Activated CD4-positive, alpha-beta T cell treated with anti-CD3 and anti-CD28 coated beads for 36 hours (primary cell): ENCODE measurements at regions of chr12 and their contacts with region 1.

Region 1: DNA sequence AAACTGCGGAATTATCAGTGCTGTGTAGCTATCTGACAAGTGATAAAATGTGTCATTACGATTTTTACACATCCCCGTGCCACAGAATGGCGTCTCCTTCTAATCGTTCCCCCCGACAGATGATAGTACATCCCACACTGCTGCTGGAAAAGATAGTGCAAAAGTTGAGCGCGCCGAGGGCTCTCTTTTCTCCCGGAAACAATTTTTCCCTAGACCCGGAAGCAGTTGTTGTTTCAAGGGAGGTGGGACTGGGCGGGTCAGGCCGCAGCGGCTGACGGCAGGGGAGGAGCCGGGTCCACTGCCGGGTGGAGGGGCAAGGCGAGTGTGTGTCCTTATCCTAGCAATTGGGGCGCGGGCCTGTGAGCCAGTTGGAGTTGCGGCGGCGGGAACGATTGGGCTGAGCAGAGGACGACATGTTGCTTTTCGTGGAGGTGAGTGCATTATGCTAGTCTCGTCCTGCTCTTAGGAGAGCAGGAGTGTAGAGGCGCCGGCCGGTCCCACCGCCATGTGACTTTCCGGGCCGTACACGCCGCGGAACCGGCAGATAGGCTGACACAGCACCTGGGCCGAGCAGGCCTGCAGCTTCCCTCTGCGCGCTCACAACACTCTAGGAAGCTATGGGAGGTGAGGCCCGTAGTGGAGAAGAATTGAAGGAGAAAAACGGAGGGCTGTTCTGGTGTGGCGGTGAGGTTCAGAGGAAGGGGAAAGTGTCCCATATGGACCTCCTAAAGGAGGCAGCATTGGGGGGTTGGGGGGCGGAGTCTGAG is at the start of gene LARP4:
- DNase-seq: peak; percentile 95
- ATAC-seq: peak; percentile 97
- H3K4me3 Mint-ChIP-seq: peak within 1 kb of the TSS; percentile 93
- H3K27ac Mint-ChIP-seq: peak within 1 kb of the TSS; percentile 94
- H3K4me1 Mint-ChIP-seq: peaks cover 13% of the 10 kb centered on the region
- H3K27me3 Mint-ChIP-seq: no peaks in the 10 kb centered on the region
- total RNA-seq, gene LARP4: 66.3 to 72.4 TPM

Region 2: DNA sequence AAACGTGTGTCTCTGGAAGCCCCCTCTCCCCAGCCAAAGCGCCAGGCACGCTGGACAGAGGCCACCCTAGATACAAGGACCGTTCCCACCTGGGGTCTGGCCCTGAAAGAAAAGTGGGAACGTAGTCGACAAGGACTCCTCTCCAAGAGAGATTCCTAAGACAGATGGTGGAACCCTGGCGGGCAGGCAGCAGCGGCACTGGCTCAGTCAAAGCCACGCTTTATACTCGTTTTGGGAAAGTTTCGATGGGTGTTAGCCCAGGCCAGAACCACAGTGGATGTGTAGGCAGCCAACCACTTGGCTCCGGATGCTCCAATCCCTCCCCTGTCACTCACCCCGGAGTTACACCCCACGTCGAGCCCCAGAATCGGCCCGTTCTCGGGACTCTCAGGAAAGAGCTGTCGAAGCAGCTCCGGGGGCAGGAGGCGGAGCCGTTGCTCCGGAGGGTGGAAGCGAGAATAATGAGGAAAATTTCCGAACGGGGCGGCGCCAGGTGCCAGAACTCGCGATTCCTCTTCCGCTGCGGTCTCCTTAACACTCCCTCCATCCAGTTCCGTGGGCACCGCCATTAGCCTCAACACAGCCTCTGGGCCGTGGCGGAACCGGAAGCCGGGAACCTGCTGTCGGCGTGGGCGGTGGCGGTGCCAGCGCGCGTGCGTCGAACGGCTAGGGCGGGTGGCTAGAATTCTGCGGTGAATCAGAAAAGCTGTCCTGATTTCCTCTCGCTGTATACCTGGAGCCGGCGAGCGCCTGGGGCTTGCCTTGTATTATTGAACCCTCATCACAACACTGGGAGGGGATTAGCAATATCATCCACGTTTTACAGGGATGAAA is 558.0 kb before region 1 on chr12 and contains the start of gene BCDIN3D:
- CTCF ChIA-PET with region 1: no interaction called
- POLR2A ChIA-PET with region 1: no interaction called
- intact Hi-C with region 1: loop called in 1 of 2 experiments (anchors 2 kb)
- DNase-seq: peak; percentile 97
- ATAC-seq: peak; percentile 92
- H3K4me3 Mint-ChIP-seq: peak within 1 kb of the TSS; percentile 90
- H3K27ac Mint-ChIP-seq: peak within 1 kb of the TSS; percentile 91
- H3K4me1 Mint-ChIP-seq: peaks cover 30% of the 10 kb centered on the region
- H3K27me3 Mint-ChIP-seq: no peaks in the 10 kb centered on the region
- total RNA-seq, gene BCDIN3D: 5.5 to 5.6 TPM

Region 3: DNA sequence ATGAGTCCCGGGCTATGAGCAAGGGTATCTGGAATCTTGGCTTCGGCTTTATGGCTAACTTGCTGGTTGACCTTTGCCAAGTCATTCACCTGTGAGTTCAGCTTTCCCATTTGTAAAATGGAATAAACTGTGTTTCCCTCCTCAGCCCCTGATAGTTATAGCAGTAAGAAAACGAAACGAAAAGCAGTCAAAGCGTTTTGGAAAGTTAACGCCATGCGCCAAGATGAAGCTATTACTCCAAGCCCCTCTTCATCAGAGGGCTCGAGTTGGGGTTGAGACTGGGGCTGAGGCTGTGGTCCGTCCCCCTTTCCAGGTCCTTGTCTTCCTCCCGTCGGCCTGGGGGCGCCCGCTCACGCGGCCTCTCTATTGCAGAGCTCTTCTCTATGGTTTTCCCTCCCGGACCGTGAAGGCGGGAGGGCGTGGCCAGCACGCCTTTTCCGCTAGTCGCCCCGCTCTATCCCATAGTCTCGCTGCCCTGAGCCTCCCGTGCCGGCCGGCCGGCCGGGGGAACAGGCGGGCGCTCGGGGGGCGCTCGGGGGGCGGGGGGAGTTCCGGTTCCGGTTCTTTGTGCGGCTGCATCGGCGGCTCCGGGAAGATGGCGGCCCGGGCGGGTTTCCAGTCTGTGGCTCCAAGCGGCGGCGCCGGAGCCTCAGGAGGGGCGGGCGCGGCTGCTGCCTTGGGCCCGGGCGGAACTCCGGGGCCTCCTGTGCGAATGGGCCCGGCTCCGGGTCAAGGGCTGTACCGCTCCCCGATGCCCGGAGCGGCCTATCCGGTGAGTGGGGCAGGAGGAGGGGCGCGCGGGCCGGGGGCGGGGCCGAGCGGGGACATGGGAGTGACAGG is 315.8 kb before region 1 on chr12 and contains the start of gene SMARCD1:
- CTCF ChIA-PET with region 1: no interaction called
- POLR2A ChIA-PET with region 1: interaction called, 4 read pairs
- intact Hi-C with region 1: loop called (anchors 1 to 2 kb)
- DNase-seq: peak; percentile 91
- ATAC-seq: peak; percentile 90
- H3K4me3 Mint-ChIP-seq: peak within 1 kb of the TSS; percentile 85
- H3K27ac Mint-ChIP-seq: peak within 1 kb of the TSS; percentile 96
- H3K4me1 Mint-ChIP-seq: peaks cover 36% of the 10 kb centered on the region
- H3K27me3 Mint-ChIP-seq: no peaks in the 10 kb centered on the region
- total RNA-seq, gene SMARCD1: 51.8 to 76.6 TPM

Region 4: DNA sequence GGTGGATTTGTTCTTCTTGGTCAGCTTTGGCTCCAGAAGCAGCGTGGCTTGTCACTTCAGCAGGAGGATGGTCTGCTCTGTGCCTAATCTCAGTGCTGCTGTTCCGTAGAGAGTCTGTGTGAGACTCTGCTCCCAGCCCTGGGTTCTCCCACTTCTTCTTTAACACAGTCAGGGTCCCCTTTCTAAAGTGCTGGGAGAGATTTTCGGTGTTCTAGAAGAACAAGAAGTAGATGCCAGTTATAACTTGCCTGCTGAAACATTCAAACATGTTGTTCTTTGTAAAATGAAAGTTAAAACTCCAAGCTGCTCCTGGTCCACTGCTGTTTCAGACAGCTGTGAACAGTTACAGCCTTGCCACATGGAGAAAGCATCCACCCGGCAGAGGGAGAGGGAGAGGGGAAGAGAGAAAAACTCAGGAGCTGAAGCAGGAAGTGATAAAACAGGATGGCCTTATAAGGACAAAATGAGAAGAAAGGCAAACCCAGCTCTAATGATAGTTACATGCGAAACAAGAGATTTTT is 178.4 kb before region 1 on chr12:
- CTCF ChIA-PET with region 1: no interaction called
- POLR2A ChIA-PET with region 1: interaction called, 5 read pairs
- intact Hi-C with region 1: loop called in 1 of 2 experiments (anchors 2 kb)
- DNase-seq: peak; percentile 48
- ATAC-seq: peak; percentile 21
- H3K4me3 Mint-ChIP-seq: no peak overlapping the region
- H3K27ac Mint-ChIP-seq: no peak overlapping the region
- H3K4me1 Mint-ChIP-seq: peaks cover 40% of the 10 kb centered on the region
- H3K27me3 Mint-ChIP-seq: no peaks in the 10 kb centered on the region

Region 5: DNA sequence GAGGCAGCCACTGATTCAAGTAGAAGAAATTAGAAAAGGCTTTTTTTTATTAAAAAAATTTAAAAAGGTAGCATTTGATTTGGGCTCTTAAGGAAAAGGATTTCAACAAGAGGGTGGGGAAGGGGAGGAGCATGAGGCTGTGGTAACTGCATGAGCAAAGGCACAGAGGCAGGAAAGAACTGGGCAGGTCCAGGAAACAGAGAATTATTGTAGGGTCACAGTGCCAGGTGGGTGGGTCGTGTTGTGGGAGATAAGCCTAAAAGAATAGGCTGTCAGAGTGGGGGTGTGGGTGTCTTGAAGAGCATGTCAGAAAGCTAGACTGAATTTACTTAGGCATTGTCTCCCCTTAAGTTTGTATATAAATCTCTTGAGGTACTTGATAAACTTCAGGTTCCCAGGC is 125.2 kb before region 1 on chr12:
- CTCF ChIA-PET with region 1: no interaction called
- POLR2A ChIA-PET with region 1: no interaction called
- intact Hi-C with region 1: no loop called
- DNase-seq: no peak
- ATAC-seq: no peak
- H3K4me3 Mint-ChIP-seq: no peak overlapping the region
- H3K27ac Mint-ChIP-seq: no peak overlapping the region
- H3K4me1 Mint-ChIP-seq: peaks cover 5% of the 10 kb centered on the region
- H3K27me3 Mint-ChIP-seq: no peaks in the 10 kb centered on the region

Region 6: GRCh38 chr12:51025836-51026638 is 625.3 kb after region 1 on chr12 and contains the start of gene SLC11A2:
- CTCF ChIA-PET with region 1: no interaction called
- POLR2A ChIA-PET with region 1: no interaction called
- intact Hi-C with region 1: no loop called
- DNase-seq: peak; percentile 97
- ATAC-seq: peak; percentile 88
- H3K4me3 Mint-ChIP-seq: peak within 1 kb of the TSS; percentile 93
- H3K27ac Mint-ChIP-seq: peak within 1 kb of the TSS; percentile 98
- H3K4me1 Mint-ChIP-seq: peaks cover 55% of the 10 kb centered on the region
- H3K27me3 Mint-ChIP-seq: no peaks in the 10 kb centered on the region
- total RNA-seq, gene SLC11A2: 31.0 to 32.9 TPM

Region 7: GRCh38 chr12:51083126-51083833 is 682.5 kb after region 1 on chr12 and contains the start of gene CSRNP2:
- CTCF ChIA-PET with region 1: no interaction called
- POLR2A ChIA-PET with region 1: no interaction called
- intact Hi-C with region 1: loop called in 1 of 2 experiments (anchors 1 kb)
- DNase-seq: peak; percentile 97
- ATAC-seq: peak; percentile 99
- H3K4me3 Mint-ChIP-seq: peak within 1 kb of the TSS; percentile 95
- H3K27ac Mint-ChIP-seq: peak within 1 kb of the TSS; percentile 86
- H3K4me1 Mint-ChIP-seq: peaks cover 46% of the 10 kb centered on the region
- H3K27me3 Mint-ChIP-seq: no peaks in the 10 kb centered on the region
- total RNA-seq, gene CSRNP2: 12.8 to 13.6 TPM